ENCODE measurements at regions of chr12 and their contacts with region 1.

Region 1: GRCh38 chr12:46153268-46153872 is 115.5 kb downstream of the SLC38A1 start:
- DNase-seq: peak; percentile 59

Region 2: GRCh38 chr12:46372544-46373110 is 219.3 kb after region 1 on chr12 and contains the start of gene SLC38A2:
- in situ Hi-C with region 1: loop called (anchors 25 kb)
- DNase-seq: peak; percentile 97